Activated naive CD4-positive, alpha-beta T cell treated with anti-CD3 and anti-CD28 coated beads for 36 hours (primary cell): ENCODE measurements at regions of chr9 and their contacts with region 1.

Region 1: DNA sequence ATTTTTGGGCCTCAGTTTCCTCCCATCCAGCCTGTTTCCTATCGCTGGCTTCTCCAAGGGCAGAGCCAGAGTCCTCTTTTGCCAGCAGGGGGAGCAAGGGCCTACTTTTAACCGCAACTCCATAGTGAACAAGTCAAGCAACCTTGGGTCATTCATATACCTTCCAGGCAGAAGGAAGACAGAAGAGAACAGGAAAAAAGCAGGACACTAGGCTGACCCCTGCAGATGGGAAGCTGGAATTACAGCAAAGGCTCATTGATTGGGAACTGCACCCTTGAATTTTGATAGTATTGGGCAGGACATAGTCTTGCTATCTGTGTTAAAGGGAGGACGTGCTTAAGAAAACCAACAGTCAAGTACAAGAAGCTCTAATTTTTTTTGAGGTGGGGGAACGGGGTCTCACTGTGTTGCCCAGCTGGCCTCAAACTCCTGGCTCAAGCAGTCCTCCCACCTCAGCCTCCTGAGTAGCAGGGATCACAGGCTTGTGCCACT is 30.1 kb downstream of the QRFP start:
- DNase-seq: peak; percentile 79
- H3K4me3 Mint-ChIP-seq: no peak overlapping the region
- H3K27ac Mint-ChIP-seq: no peak overlapping the region
- H3K4me1 Mint-ChIP-seq: no peaks in the 10 kb centered on the region
- H3K27me3 Mint-ChIP-seq: no peaks in the 10 kb centered on the region

Region 2: GRCh38 chr9:130940693-130941576 is 74.4 kb after region 1 on chr9:
- CTCF ChIA-PET with region 1: interaction called, 7 read pairs
- intact Hi-C with region 1: loop called (anchors 1 kb)
- DNase-seq: peak; percentile 87
- H3K4me3 Mint-ChIP-seq: no peak overlapping the region
- H3K27ac Mint-ChIP-seq: no peak overlapping the region
- H3K4me1 Mint-ChIP-seq: peaks cover 10% of the 10 kb centered on the region
- H3K27me3 Mint-ChIP-seq: peaks cover 52% of the 10 kb centered on the region